ENCODE measurements at regions of chr6 and their contacts with region 1.

Region 1: GRCh38 chr6:53326372-53327016 is 22.3 kb downstream of the ELOVL5 start:
- DNase-seq: no peak
- CTCF ChIP-seq: no peak

Region 2: GRCh38 chr6:53309059-53309900 is 17.2 kb before region 1 on chr6:
- CTCF ChIA-PET with region 1: interaction called, 13 read pairs
- POLR2A ChIA-PET with region 1: no interaction called
- DNase-seq: peak; percentile 22
- CTCF ChIP-seq: no peak

Region 3: GRCh38 chr6:53342217-53342616 is 15.7 kb after region 1 on chr6:
- CTCF ChIA-PET with region 1: interaction called, 18 read pairs
- POLR2A ChIA-PET with region 1: no interaction called
- DNase-seq: no peak
- CTCF ChIP-seq: no peak